Right cardiac atrium (tissue), 5 donors: ENCODE measurements at regions of chr1 and their contacts with region 1.

Region 1: GRCh38 chr1:46724991-46725735 is 6.2 kb upstream of the EFCAB14 start:
- DNase-seq: peak; percentile 58 to 83 (median 72)
- ATAC-seq: peak; percentile 92 to 93
- H3K4me3 ChIP-seq: no peak overlapping the region
- H3K27ac ChIP-seq: no peak overlapping the region
- H3K4me1 ChIP-seq: no peaks in the 10 kb centered on the region
- H3K27me3 ChIP-seq: no peaks in the 10 kb centered on the region

Region 2: GRCh38 chr1:46477153-46477929 is 247.8 kb before region 1 on chr1:
- intact Hi-C with region 1: loop called in 2 of 4 experiments (anchors 10 kb)
- DNase-seq: peak; percentile 62 to 87 (median 87)
- ATAC-seq: peak; percentile 58 to 76
- H3K4me3 ChIP-seq: no peak overlapping the region
- H3K27ac ChIP-seq: no peak overlapping the region
- H3K4me1 ChIP-seq: no peaks in the 10 kb centered on the region
- H3K27me3 ChIP-seq: no peaks in the 10 kb centered on the region

Region 3: DNA sequence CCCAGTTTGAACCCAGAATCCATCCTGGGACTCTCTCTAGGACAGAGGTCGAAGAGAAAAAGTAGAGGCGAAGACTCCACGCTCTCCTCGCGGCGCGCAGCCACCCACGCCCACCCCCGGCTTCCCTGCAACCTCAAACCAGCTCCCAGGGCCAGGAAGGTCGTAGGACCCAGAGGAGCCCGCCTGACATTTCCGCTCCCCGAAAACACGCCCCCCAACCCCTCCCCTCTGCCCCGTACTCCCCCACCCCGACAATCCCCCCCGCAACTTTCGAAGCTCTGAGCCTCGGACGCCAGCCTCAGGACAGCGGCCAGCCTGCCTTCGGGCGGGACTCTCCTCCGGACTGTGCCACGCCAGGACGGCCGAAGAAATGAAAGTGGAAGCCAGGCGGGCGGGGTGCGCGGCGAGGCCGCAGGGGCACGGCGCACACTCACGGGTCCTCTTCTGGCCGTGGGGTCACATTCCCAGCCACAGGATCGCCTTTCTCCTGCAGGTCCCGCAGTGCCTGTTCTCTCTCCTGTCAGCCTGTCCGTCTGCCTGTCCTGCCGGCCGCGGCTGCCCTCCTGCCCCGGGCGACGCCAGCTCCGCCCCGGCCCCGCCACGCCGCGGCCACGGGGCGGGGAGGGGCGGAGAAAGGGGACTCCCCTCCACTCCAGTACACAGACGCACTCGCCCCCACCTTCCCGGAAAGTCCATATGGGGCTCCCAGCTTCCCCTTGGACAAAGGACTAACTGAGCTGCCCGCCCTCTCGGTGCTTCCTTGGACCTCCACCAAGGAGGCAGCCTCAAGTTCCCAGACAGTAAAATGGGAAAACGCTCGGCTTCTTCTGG is 108.7 kb before region 1 on chr1 and contains the start of gene MOB3C:
- intact Hi-C with region 1: loop called in 3 of 4 experiments (anchors 5 to 10 kb)
- DNase-seq: peak; percentile 92 to 96 (median 94)
- ATAC-seq: peak; percentile 94
- H3K4me3 ChIP-seq: peak within 1 kb of the TSS; percentile 75
- H3K27ac ChIP-seq: peak within 1 kb of the TSS; percentile 84
- H3K4me1 ChIP-seq: peaks cover 16% of the 10 kb centered on the region
- H3K27me3 ChIP-seq: no peaks in the 10 kb centered on the region
- total RNA-seq, gene MOB3C: 14.1 to 20.9 (median 16.5) TPM

Region 4: DNA sequence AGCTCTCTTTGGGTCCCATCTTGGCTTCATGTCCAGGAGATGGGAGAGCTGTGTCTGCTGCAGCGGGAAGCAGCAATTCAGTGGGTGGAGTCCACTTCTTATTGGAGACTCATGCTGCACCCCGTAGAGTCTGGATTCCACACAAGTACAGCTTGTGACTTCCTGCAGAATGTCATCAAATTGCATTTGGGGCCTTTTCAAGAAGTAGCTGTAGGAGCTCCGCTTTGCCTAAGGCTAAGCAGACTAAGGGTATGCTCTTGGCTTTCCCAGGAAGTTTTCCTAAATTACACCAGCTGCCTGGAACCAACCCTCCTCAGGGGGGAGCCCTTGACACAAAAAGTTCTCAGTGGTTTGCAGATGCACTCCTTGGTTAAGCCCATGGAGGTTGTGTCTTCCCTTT is 102.8 kb before region 1 on chr1:
- intact Hi-C with region 1: loop called in 3 of 4 experiments (anchors 5 to 10 kb)
- DNase-seq: peak in 1 of 3 donors; percentile 35
- ATAC-seq: no peak
- H3K4me3 ChIP-seq: no peak overlapping the region
- H3K27ac ChIP-seq: no peak overlapping the region
- H3K4me1 ChIP-seq: peaks cover 10% of the 10 kb centered on the region
- H3K27me3 ChIP-seq: no peaks in the 10 kb centered on the region

Region 5: GRCh38 chr1:46667782-46668760 is 57.1 kb before region 1 on chr1 and contains the start of gene ATPAF1:
- intact Hi-C with region 1: loop called in 1 of 4 experiments (anchors 10 kb)
- DNase-seq: peak; percentile 84 to 93 (median 90)
- ATAC-seq: peak; percentile 95
- H3K4me3 ChIP-seq: peak within 1 kb of the TSS; percentile 97
- H3K27ac ChIP-seq: peak within 1 kb of the TSS; percentile 63
- H3K4me1 ChIP-seq: no peaks in the 10 kb centered on the region
- H3K27me3 ChIP-seq: no peaks in the 10 kb centered on the region
- total RNA-seq, gene ATPAF1: 144 to 181 (median 166) TPM